Endothelial cell of umbilical vein (primary cell): ENCODE measurements at regions of chr15 and their contacts with region 1.

Region 1: GRCh38 chr15:33086507-33087121 is 107.9 kb downstream of the FMN1 start:
- DNase-seq: peak; percentile 62
- H3K4me3 ChIP-seq: no peak overlapping the region
- H3K27ac ChIP-seq: no peak overlapping the region
- H3K4me1 ChIP-seq: no peaks in the 10 kb centered on the region
- H3K27me3 ChIP-seq: no peaks in the 10 kb centered on the region
- CTCF ChIP-seq: peak; percentile 35 to 44
- POLR2A ChIP-seq: no peak

Region 2: DNA sequence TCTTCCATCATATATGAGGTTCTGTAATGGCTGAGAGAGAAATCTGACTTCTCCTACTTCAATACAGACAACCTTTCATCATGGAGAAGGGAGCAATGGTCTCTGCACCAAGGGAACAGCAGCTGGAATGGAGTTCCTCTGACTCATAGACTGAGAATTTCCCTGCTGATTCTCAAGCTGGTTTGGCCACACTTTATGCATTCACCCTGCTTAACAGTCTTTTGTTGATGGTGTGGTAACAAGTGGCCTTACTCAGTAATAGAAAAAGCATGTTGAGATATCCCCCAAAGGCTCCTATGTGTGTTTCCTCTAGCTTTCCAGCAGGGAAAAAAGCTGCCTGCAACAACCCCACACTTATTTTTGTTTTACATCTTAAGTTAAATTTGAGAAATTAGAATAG is 230.7 kb before region 1 on chr15:
- CTCF ChIA-PET with region 1: no interaction called
- POLR2A ChIA-PET with region 1: no interaction called
- dilution Hi-C with region 1: no loop called
- intact Hi-C with region 1: no loop called
- DNase-seq: peak; percentile 94
- H3K4me3 ChIP-seq: no peak overlapping the region
- H3K27ac ChIP-seq: peak overlapping the region; percentile 85
- H3K4me1 ChIP-seq: peaks cover 34% of the 10 kb centered on the region
- H3K27me3 ChIP-seq: no peaks in the 10 kb centered on the region
- CTCF ChIP-seq: no peak
- POLR2A ChIP-seq: peak; percentile 28

Region 3: GRCh38 chr15:33021806-33022389 is 64.7 kb before region 1 on chr15:
- CTCF ChIA-PET with region 1: interaction called, 16 read pairs
- POLR2A ChIA-PET with region 1: no interaction called
- dilution Hi-C with region 1: no loop called
- intact Hi-C with region 1: loop called (anchors 1 kb)
- DNase-seq: peak; percentile 71
- H3K4me3 ChIP-seq: no peak overlapping the region
- H3K27ac ChIP-seq: peak overlapping the region; percentile 60
- H3K4me1 ChIP-seq: peaks cover 10% of the 10 kb centered on the region
- H3K27me3 ChIP-seq: no peaks in the 10 kb centered on the region
- CTCF ChIP-seq: peak; percentile 45 to 51
- POLR2A ChIP-seq: no peak

Region 4: DNA sequence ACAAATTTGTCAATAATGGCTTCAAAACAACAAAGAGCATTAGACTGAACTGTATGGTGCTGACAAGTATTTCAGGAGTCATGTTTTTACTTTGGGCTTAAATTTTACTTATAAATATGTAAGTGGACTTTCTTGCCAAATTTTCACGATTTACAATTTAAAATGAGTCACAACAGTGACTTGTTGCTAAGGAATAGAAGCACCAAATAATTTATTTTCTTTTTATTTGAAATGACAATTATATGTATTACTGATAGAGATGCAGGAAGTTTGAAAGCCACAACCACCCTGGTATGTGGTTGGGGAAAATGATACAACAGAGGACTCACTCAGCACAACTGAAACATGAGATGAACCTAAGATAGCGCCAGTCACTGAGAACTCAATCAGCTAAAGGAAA is 17.6 kb after region 1 on chr15:
- CTCF ChIA-PET with region 1: interaction called, 18 read pairs
- POLR2A ChIA-PET with region 1: no interaction called
- dilution Hi-C with region 1: no loop called
- intact Hi-C with region 1: no loop called
- DNase-seq: peak; percentile 72
- H3K4me3 ChIP-seq: no peak overlapping the region
- H3K27ac ChIP-seq: no peak overlapping the region
- H3K4me1 ChIP-seq: peaks cover 3% of the 10 kb centered on the region
- H3K27me3 ChIP-seq: no peaks in the 10 kb centered on the region
- CTCF ChIP-seq: no peak
- POLR2A ChIP-seq: no peak

Region 5: GRCh38 chr15:33132722-33133345 is 46.2 kb after region 1 on chr15:
- CTCF ChIA-PET with region 1: interaction called, 497 read pairs
- POLR2A ChIA-PET with region 1: no interaction called
- dilution Hi-C with region 1: no loop called
- intact Hi-C with region 1: loop called (anchors 1 kb)
- DNase-seq: peak; percentile 68
- H3K4me3 ChIP-seq: no peak overlapping the region
- H3K27ac ChIP-seq: no peak overlapping the region
- H3K4me1 ChIP-seq: peaks cover 10% of the 10 kb centered on the region
- H3K27me3 ChIP-seq: peaks cover 5% of the 10 kb centered on the region in 2 experiments
- CTCF ChIP-seq: peak; percentile 68 to 78
- POLR2A ChIP-seq: no peak

Region 6: DNA sequence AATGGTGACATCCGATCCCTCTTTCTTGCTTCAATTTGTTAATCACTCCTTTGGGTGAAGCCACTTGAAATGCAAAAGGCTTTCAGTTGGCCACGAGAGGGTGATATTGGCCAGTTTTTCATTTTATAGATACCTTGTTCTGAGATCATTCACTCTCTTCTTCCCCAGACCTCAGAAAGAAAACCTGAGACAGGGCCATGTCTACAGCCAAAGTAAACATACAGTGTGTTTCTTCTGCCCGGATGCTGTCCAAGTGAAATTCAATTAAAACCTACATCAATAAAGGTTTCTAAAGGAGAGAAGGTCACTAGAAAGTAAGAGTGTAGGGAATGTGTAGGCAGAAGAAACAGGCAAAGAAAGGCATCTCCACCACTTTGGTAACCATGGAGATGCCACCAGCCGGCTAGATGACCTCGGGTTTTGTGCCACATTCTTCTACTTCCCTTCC is 147.4 kb after region 1 on chr15:
- CTCF ChIA-PET with region 1: interaction called, 4 read pairs
- POLR2A ChIA-PET with region 1: no interaction called
- dilution Hi-C with region 1: no loop called
- intact Hi-C with region 1: loop called (anchors 5 kb)
- DNase-seq: peak; percentile 41
- H3K4me3 ChIP-seq: no peak overlapping the region
- H3K27ac ChIP-seq: no peak overlapping the region
- H3K4me1 ChIP-seq: no peaks in the 10 kb centered on the region
- H3K27me3 ChIP-seq: peaks cover 9% of the 10 kb centered on the region in 2 experiments
- CTCF ChIP-seq: peak; percentile 21 to 39
- POLR2A ChIP-seq: no peak